Uterus (tissue), 4 donors: ENCODE measurements at regions of chr22 and their contacts with region 1.

Region 1: GRCh38 chr22:36860821-36861659 is at the start of gene NCF4:
- DNase-seq: no peak
- H3K4me3 ChIP-seq: no peak within 1 kb of the TSS
- H3K27ac ChIP-seq: no peak within 1 kb of the TSS
- H3K4me1 ChIP-seq: peaks cover 0 to under 1% of the 10 kb centered on the region in 2 donors
- H3K27me3 ChIP-seq: no peaks in the 10 kb centered on the region
- CTCF ChIP-seq: no peak
- POLR2A ChIP-seq: no peak
- total RNA-seq, gene NCF4: 1.8 to 21.2 (median 6.3) TPM

Region 2: GRCh38 chr22:36734171-36735058 is 126.6 kb before region 1 on chr22:
- intact Hi-C with region 1: no loop called
- DNase-seq: no peak
- H3K4me3 ChIP-seq: no peak overlapping the region
- H3K27ac ChIP-seq: no peak overlapping the region
- H3K4me1 ChIP-seq: no peaks in the 10 kb centered on the region
- H3K27me3 ChIP-seq: no peaks in the 10 kb centered on the region
- CTCF ChIP-seq: no peak
- POLR2A ChIP-seq: no peak

Region 3: DNA sequence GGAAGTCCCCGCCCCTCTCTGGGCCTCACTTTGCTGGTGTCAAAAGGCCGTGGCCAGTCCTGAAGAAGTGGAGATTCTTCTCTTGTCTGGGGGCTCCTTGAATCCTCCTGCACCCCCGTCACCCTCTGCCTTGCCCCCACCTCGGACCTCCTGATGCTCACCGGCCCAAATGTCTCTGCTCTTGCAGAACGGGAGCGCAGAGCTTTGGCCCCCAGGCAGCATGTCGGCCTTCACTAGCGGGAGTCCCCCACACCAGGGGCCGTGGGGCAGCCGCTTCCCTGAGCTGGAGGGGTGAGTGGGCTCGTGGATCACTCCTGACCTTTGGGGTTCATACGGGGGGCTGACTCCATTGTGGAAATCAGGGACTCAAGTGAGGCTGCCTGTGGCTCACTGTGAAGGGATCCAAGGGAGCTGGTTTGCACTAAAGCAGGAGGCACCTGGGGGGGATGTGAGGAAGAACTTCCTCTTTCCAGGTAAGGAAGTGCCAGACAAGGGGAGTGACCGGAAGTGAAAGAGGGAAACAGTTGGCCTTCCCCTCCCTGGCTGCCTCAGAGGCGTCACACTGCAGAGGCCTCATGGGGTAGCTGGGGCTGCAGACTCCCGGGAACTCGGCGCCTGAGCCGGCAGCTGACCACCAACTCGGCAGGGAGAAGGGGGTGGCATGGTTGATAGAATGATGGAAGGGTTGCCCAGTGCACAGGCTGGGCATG is 75.5 kb after region 1 on chr22:
- intact Hi-C with region 1: no loop called
- DNase-seq: no peak
- H3K4me3 ChIP-seq: no peak overlapping the region
- H3K27ac ChIP-seq: no peak overlapping the region
- H3K4me1 ChIP-seq: no peaks in the 10 kb centered on the region
- H3K27me3 ChIP-seq: no peaks in the 10 kb centered on the region
- CTCF ChIP-seq: no peak
- POLR2A ChIP-seq: no peak

Region 4: DNA sequence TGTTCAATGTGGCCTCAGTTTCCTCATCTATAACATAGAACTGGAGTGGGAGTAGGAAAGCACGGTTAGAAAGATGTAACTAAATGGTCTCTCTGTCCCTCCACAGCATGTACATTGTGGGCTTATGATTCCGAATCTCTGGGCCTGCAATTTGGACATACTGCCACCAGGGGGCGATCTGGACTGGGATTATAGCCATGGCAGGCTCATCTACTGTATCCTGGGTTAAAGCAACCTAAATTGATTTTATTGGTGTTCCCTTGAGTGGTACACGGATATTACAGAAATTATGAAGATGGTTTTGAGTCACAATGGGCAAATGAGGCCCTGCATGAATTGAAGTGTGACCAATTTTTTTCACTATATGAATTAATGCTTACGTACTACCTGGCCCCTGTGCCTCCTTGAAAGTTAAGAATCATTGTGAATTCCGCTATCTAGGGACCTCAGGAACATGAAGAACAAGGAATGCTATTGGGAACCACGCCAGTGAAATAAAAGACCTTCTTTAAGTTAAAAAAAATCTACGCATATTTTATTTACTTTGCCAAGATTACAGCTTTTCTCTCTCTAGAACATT is 125.3 kb after region 1 on chr22:
- intact Hi-C with region 1: loop called (anchors 10 kb)
- DNase-seq: no peak
- H3K4me3 ChIP-seq: no peak overlapping the region
- H3K27ac ChIP-seq: no peak overlapping the region
- H3K4me1 ChIP-seq: no peaks in the 10 kb centered on the region
- H3K27me3 ChIP-seq: no peaks in the 10 kb centered on the region
- CTCF ChIP-seq: peak in 1 of 4 experiments; percentile 12
- POLR2A ChIP-seq: no peak